ENCODE measurements at regions of chr11 and their contacts with region 1.

Region 1: GRCh38 chr11:13343931-13344717 is 66.5 kb downstream of the BMAL1 start:
- ATAC-seq: peak in 7 of 8 experiments; percentile 32 to 89 (median 62)
- H3K4me3 ChIP-seq: no peak overlapping the region
- H3K27ac ChIP-seq: no peak overlapping the region
- H3K4me1 ChIP-seq: no peaks in the 10 kb centered on the region

Region 2: GRCh38 chr11:13210424-13210823 is 133.7 kb before region 1 on chr11:
- in situ Hi-C with region 1: loop called in 6 of 9 experiments (anchors 10 to 25 kb)
- ATAC-seq: peak; percentile 13 to 86 (median 55)
- H3K4me3 ChIP-seq: no peak overlapping the region
- H3K27ac ChIP-seq: no peak overlapping the region
- H3K4me1 ChIP-seq: peaks cover 26 to 32% of the 10 kb centered on the region in 2 donors

Region 3: GRCh38 chr11:13238879-13239514 is 105.1 kb before region 1 on chr11:
- in situ Hi-C with region 1: loop called in 1 of 9 experiments (anchors 25 kb)
- ATAC-seq: peak in 4 of 8 experiments; percentile 46 to 80 (median 57)
- H3K4me3 ChIP-seq: no peak overlapping the region
- H3K27ac ChIP-seq: no peak overlapping the region
- H3K4me1 ChIP-seq: peaks cover 0 to 5% of the 10 kb centered on the region in 2 donors

Measured in motor neuron (in vitro differentiated cells).